ENCODE measurements at regions of chr19 and their contacts with region 1.

Region 1: DNA sequence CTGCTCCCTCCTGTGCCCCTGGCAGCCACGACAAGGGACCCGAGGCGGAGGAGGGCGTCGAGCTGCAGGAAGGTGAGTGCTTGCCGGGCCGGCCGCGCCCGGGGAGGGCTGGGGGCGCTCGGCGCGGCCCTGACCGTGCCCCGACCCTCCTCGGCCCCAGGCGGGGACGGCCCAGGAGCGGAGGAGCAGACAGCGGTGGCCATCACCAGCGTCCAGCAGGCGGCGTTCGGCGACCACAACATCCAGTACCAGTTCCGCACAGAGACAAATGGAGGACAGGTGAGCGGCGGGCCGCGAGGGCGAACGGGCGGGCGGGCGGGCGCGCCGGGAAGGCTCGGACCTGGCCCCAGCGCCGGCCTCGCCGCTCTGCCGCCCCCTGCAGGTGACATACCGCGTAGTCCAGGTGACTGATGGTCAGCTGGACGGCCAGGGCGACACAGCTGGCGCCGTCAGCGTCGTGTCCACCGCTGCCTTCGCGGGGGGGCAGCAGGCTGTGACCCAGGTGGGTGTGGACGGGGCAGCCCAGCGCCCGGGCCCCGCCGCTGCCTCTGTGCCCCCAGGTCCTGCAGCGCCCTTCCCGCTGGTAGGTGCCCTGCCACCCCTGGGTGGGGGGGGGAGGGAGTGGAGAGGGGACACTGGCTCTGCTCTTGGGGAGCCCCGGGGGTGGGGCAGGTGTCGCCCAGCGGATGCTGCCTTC is 807 bp downstream of the USF2 start:
- DNase-seq: peak; percentile 88
- ATAC-seq: peak; percentile 68
- H3K4me3 Mint-ChIP-seq: peak overlapping the region; percentile 63
- H3K27ac Mint-ChIP-seq: peak overlapping the region; percentile 63
- H3K4me1 Mint-ChIP-seq: peaks cover 20% of the 10 kb centered on the region
- H3K27me3 Mint-ChIP-seq: no peaks in the 10 kb centered on the region

Region 2: GRCh38 chr19:35066691-35067563 is 202.6 kb before region 1 on chr19:
- CTCF ChIA-PET with region 1: no interaction called
- POLR2A ChIA-PET with region 1: no interaction called
- intact Hi-C with region 1: loop called in 1 of 2 experiments (anchors 1 kb)
- DNase-seq: peak; percentile 96
- ATAC-seq: peak; percentile 89
- H3K4me3 Mint-ChIP-seq: peak overlapping the region; percentile 39
- H3K27ac Mint-ChIP-seq: peak overlapping the region; percentile 62
- H3K4me1 Mint-ChIP-seq: peaks cover 17% of the 10 kb centered on the region
- H3K27me3 Mint-ChIP-seq: no peaks in the 10 kb centered on the region

Region 3: DNA sequence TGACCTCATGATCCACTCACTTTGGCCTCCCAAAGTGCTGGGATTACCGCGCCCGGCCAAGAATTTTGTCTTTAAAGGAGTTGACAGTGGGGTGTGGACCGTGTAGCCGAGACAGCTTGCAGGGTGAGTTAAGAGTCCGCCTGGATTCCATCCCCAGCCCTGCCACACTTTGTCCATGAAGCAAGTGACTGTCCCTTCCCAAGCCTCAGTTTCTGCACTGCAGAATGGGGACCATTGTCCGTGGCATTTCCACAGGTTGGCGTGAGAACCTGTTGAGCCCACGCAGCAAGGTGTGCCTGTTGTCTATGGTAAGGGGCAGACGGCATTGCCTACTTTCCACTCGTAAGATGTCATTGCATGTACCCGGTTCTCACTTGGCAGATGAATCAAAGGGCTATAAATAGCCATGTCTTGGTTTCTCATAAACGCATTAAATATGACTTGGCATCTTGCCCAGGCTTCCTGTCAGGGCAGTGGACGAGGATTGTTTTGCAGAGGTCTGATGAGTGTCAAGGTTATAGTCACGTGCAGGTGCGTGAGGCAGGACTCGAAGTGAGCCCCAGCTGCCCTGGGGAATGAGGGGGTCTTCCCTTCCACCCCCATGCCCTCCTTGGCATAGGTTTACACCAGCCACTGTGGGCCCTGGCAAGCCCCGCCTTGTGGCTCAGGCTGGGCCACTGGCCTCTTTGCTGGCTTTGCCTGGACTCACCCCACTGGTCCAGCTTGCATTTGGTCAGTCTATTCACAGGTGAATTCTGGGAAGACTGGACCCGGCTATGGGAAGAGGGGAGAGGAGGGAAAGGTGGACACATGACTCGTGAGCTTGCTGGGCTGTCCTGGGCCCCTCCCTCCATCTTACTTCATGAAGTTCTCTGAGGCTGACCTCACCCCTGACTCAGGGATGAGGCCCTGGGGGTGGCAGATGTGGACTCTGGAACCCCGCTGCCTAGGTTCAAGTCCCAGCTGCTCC is 55.6 kb before region 1 on chr19:
- CTCF ChIA-PET with region 1: interaction called, 3 read pairs
- POLR2A ChIA-PET with region 1: no interaction called
- intact Hi-C with region 1: loop called (anchors 1 to 5 kb)
- DNase-seq: peak; percentile 88
- ATAC-seq: peak; percentile 67
- H3K4me3 Mint-ChIP-seq: peak overlapping the region; percentile 41
- H3K27ac Mint-ChIP-seq: peak overlapping the region; percentile 96
- H3K4me1 Mint-ChIP-seq: peaks cover 65% of the 10 kb centered on the region
- H3K27me3 Mint-ChIP-seq: no peaks in the 10 kb centered on the region

Region 4: DNA sequence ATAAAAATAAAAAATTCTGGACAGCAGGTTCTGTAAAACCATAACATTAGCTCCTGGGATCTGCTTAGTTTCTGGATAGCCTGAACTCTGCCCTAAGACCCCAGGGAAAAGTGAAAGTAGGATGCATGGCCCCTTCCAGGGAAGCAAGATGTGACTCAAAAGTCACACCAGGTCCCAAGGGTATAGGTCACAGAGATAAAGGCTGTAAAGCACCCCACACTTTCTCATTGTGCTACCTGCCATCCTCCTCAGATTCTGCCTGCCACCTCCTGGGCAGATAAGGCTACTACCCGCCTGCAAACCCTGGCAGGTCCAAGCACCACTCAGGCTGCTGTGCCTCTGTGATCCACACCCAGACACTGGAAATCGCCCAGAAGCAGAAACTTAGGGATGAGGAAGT is 199.1 kb after region 1 on chr19:
- CTCF ChIA-PET with region 1: no interaction called
- POLR2A ChIA-PET with region 1: no interaction called
- intact Hi-C with region 1: loop called in 1 of 2 experiments (anchors 1 kb)
- DNase-seq: peak; percentile 81
- ATAC-seq: peak; percentile 100
- H3K4me3 Mint-ChIP-seq: no peak overlapping the region
- H3K27ac Mint-ChIP-seq: no peak overlapping the region
- H3K4me1 Mint-ChIP-seq: peaks cover 7% of the 10 kb centered on the region
- H3K27me3 Mint-ChIP-seq: no peaks in the 10 kb centered on the region

Region 5: GRCh38 chr19:35612559-35613321 is 343.2 kb after region 1 on chr19 and contains the start of gene HAUS5:
- CTCF ChIA-PET with region 1: no interaction called
- POLR2A ChIA-PET with region 1: no interaction called
- intact Hi-C with region 1: loop called in 1 of 2 experiments (anchors 1 kb)
- DNase-seq: peak; percentile 98
- ATAC-seq: peak; percentile 96
- H3K4me3 Mint-ChIP-seq: peak within 1 kb of the TSS; percentile 81
- H3K27ac Mint-ChIP-seq: peak within 1 kb of the TSS; percentile 90
- H3K4me1 Mint-ChIP-seq: peaks cover 23% of the 10 kb centered on the region
- H3K27me3 Mint-ChIP-seq: no peaks in the 10 kb centered on the region
- total RNA-seq, gene HAUS5: 39.7 to 41.0 TPM